BJ (cell line): ENCODE measurements at regions of chr4 and their contacts with region 1.

Region 1: GRCh38 chr4:76614589-76614988 is 179.6 kb downstream of the SHROOM3 start:
- DNase-seq: peak; percentile 76
- H3K4me3 ChIP-seq: no peak overlapping the region
- H3K27me3 ChIP-seq: no peaks in the 10 kb centered on the region
- CTCF ChIP-seq: no peak

Region 2: GRCh38 chr4:76246025-76246424 is 368.6 kb before region 1 on chr4:
- CTCF ChIA-PET with region 1: no interaction called
- POLR2A ChIA-PET with region 1: no interaction called
- DNase-seq: no peak
- H3K4me3 ChIP-seq: no peak overlapping the region
- H3K27me3 ChIP-seq: peaks cover 14% of the 10 kb centered on the region
- CTCF ChIP-seq: no peak

Region 3: DNA sequence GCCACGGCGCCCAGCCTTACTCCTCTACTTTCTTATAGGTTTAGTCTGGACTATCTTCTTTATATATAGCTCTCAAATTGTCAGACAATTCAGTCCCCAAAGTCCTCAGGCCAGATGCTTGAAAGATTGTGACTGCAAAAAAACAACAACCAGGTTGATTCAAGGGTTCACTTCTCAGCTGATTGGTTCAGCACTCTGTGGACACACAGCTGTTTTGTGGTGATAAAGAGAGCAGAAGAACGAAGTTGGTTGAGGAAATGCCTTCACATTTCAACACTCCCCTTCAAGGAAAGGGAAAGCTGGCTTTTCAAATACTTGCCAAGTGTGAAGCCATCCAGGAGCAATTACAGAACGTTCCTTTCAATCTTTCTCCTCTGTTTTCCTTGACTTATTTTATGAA is 12.8 kb before region 1 on chr4:
- CTCF ChIA-PET with region 1: no interaction called
- POLR2A ChIA-PET with region 1: no interaction called
- DNase-seq: no peak
- H3K4me3 ChIP-seq: no peak overlapping the region
- H3K27me3 ChIP-seq: no peaks in the 10 kb centered on the region
- CTCF ChIP-seq: no peak

Region 4: DNA sequence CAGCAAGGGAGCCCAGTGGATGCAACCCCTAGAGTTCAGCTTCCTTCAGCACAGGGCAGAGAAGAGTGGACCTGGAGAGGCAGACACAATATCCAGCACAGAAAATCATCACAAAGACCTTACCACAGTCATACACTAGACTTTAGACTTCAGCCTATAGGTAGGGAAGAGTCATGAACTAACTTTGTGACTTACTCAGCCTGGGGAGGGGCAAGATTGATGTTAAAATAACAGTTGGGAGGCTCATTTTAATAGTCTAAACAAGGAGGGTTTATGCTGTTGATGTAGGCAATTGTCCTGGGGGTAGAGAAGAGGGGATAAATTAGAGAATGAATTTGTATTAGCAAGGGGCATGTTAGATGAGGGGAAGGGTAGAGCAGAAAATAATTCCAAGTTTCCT is 159.2 kb after region 1 on chr4:
- CTCF ChIA-PET with region 1: no interaction called
- POLR2A ChIA-PET with region 1: interaction called, 10 read pairs
- DNase-seq: no peak
- H3K4me3 ChIP-seq: no peak overlapping the region
- H3K27me3 ChIP-seq: no peaks in the 10 kb centered on the region
- CTCF ChIP-seq: no peak